PC-9 (cell line): ENCODE measurements at regions of chr3 and their contacts with region 1.

Region 1: GRCh38 chr3:87167628-87168456 is 59.3 kb upstream of the CHMP2B start:
- DNase-seq: peak in 1 of 2 experiments; percentile 20
- H3K4me3 ChIP-seq: peak overlapping the region; percentile 39; the same call in 1 of the 2 replicates
- H3K27ac ChIP-seq: no peak overlapping the region
- H3K4me1 ChIP-seq: no peaks in the 10 kb centered on the region
- H3K27me3 ChIP-seq: no peaks in the 10 kb centered on the region
- CTCF ChIP-seq: peak; percentile 77

Region 2: GRCh38 chr3:85890043-85890555 is 1277.7 kb before region 1 on chr3:
- CTCF ChIA-PET with region 1: no interaction called
- POLR2A ChIA-PET with region 1: no interaction called
- intact Hi-C with region 1: no loop called
- DNase-seq: no peak
- H3K4me3 ChIP-seq: no peak overlapping the region
- H3K27ac ChIP-seq: no peak overlapping the region
- H3K4me1 ChIP-seq: no peaks in the 10 kb centered on the region
- H3K27me3 ChIP-seq: no peaks in the 10 kb centered on the region
- CTCF ChIP-seq: no peak

Region 3: DNA sequence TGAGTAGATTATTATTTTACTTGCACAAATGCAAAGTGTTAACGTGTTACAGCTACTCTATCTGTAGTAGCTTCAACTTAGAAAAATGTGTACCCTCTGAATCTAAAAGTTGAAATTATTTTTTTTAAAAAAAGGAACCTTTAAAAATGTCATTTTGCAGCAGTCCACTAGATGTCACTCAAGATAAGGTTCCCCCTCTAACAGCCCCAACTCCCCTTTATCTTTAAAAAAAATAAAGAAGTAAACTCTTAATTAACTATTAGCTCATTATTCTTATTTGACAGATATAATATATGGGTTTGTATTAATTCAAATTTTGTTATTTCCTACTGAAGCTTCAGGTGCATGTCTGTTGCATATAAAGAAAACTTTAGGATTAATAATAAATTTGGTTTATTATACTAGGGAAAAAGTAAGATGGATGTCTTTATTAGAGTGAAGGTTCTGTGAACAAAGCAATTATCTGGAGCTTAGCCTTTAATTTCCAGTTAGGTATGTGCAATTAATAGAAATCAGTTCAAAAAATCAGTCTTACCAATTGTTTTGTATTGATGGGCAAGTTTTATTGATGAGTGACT is 465.4 kb before region 1 on chr3:
- CTCF ChIA-PET with region 1: no interaction called
- POLR2A ChIA-PET with region 1: interaction called, 4 read pairs
- intact Hi-C with region 1: loop called (anchors 10 kb)
- DNase-seq: no peak
- H3K4me3 ChIP-seq: no peak overlapping the region
- H3K27ac ChIP-seq: no peak overlapping the region
- H3K4me1 ChIP-seq: no peaks in the 10 kb centered on the region
- H3K27me3 ChIP-seq: no peaks in the 10 kb centered on the region
- CTCF ChIP-seq: peak; percentile 75

Region 4: GRCh38 chr3:86774082-86774691 is 393.7 kb before region 1 on chr3:
- CTCF ChIA-PET with region 1: interaction called, 4 read pairs
- POLR2A ChIA-PET with region 1: interaction called, 5 read pairs
- intact Hi-C with region 1: loop called (anchors 1 kb)
- DNase-seq: peak in 1 of 2 experiments; percentile 44
- H3K4me3 ChIP-seq: no peak overlapping the region
- H3K27ac ChIP-seq: no peak overlapping the region
- H3K4me1 ChIP-seq: no peaks in the 10 kb centered on the region
- H3K27me3 ChIP-seq: no peaks in the 10 kb centered on the region
- CTCF ChIP-seq: peak; percentile 81

Region 5: DNA sequence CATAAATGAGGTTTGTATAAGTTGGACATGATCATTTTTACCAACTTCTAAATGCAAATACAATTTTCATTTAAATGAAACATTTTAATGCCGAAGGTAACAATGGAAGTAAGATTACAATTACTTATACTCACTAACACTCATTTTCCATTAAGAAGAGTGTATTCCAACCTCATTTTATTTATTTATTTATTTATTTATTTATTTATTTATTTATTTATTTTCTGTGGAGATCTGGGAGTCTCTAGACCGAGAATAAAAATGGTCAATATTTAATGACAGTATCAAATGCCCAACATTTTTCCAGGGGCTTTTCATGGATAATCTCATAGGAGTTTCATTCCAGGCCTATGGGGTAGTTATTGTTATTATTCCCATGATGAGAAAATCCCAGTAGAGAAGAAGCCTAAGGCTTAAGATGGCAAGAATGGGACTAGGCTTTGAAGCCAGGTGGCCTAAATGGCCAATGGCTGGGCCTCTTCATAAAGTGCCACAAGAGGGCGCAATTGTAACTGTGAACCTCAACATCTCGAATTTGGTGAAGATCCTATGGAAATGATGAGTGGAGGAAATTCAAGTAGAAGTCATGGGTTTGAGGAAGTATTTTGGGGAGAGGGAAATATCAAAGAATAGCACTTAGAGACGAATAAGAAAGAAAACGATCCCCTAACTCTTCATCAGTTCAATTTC is 198.2 kb before region 1 on chr3:
- CTCF ChIA-PET with region 1: no interaction called
- POLR2A ChIA-PET with region 1: no interaction called
- intact Hi-C with region 1: loop called (anchors 5 kb)
- DNase-seq: no peak
- H3K4me3 ChIP-seq: no peak overlapping the region
- H3K27ac ChIP-seq: no peak overlapping the region
- H3K4me1 ChIP-seq: peaks cover 12% of the 10 kb centered on the region; the same call in 1 of the 2 replicates
- H3K27me3 ChIP-seq: no peaks in the 10 kb centered on the region
- CTCF ChIP-seq: peak; percentile 84

Region 6: DNA sequence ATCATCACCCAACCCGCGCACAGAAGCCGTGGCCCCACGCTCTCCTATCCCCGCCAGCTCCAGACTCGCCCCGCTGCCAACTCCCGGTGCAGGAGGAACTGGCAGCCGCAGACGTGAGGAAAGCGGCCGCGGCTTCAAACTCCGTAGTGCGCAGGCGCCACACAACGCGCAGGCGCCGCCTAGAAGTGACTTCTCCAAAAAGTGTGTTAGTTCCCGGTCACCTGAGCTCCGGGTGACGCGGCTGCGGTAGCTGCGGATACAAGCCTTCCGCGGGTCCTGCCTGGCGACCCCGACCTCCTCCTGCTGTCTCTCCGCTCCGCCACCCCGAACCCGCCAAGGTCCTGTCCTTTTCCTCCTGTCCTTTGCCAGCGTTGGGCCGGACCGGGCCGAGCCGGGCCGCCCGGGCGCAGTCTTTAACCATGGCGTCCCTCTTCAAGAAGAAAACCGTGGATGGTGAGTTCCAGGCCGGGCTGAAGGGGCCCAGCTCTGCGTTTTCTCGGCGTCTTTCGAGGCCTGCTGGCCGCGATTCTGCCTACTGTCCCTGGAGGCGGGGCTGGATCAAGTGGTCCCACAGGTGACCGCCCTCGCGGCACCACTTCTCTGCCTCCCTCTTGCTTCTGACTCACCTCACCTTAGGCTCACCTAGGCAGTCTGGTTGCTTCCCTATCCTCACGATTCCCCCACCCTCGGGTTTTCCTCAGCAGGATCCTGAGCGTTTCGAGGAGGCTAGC is 59.4 kb after region 1 on chr3 and contains the start of gene CHMP2B:
- CTCF ChIA-PET with region 1: interaction called, 4 read pairs
- POLR2A ChIA-PET with region 1: no interaction called
- intact Hi-C with region 1: loop called (anchors 5 kb)
- DNase-seq: peak; percentile 85 to 92
- H3K4me3 ChIP-seq: peak within 1 kb of the TSS; percentile 84
- H3K27ac ChIP-seq: peak within 1 kb of the TSS; percentile 97
- H3K4me1 ChIP-seq: peaks cover 25% of the 10 kb centered on the region
- H3K27me3 ChIP-seq: no peaks in the 10 kb centered on the region
- CTCF ChIP-seq: no peak
- total RNA-seq, gene CHMP2B: 38.1 and 54.6 TPM in 2 replicates

Region 7: DNA sequence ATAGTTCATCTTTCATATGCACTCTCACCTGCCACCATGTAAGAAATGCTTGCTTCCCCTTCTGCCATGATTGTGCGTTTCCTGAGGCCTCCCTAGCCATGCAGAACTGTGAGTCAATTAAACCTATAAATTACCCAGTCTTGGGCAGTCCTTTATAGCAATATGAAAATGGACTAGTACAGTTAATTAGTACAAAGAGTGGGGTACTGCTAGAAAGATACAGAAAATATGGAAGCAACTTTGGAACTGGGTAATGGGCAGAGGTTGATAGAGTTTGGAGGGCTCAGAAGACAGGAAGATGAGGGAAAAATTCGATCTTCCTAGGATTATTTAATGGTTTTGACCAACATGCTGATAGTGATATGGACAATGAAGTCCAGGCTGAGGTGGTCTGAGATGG is 644.1 kb after region 1 on chr3:
- CTCF ChIA-PET with region 1: no interaction called
- POLR2A ChIA-PET with region 1: no interaction called
- intact Hi-C with region 1: no loop called
- DNase-seq: no peak
- H3K4me3 ChIP-seq: no peak overlapping the region
- H3K27ac ChIP-seq: no peak overlapping the region
- H3K4me1 ChIP-seq: no peaks in the 10 kb centered on the region
- H3K27me3 ChIP-seq: no peaks in the 10 kb centered on the region
- CTCF ChIP-seq: no peak

Region 8: DNA sequence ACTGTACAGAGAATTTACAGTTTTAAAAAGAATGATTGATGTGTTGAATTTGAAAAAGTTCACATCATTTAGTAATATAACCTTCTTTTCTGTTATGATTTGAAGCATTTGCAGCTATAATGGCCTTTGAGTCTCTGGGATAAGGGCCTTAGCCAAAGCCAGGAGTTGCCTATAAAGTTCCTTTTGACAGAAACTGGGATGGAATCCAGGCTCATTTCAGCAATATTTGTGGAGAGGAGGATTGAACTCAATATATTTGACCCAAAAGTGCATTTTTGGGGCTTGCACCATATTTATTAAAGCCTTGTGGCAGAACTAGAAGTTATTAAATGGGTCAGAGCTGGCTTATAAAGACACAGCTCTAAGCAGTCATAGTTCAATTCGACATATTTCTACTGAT is 1590.8 kb after region 1 on chr3:
- CTCF ChIA-PET with region 1: no interaction called
- POLR2A ChIA-PET with region 1: no interaction called
- intact Hi-C with region 1: no loop called
- DNase-seq: no peak
- H3K4me3 ChIP-seq: no peak overlapping the region
- H3K27ac ChIP-seq: no peak overlapping the region
- H3K4me1 ChIP-seq: no peaks in the 10 kb centered on the region
- H3K27me3 ChIP-seq: no peaks in the 10 kb centered on the region
- CTCF ChIP-seq: no peak